Caco-2 (cell line): ENCODE measurements at regions of chr11 and their contacts with region 1.

Region 1: DNA sequence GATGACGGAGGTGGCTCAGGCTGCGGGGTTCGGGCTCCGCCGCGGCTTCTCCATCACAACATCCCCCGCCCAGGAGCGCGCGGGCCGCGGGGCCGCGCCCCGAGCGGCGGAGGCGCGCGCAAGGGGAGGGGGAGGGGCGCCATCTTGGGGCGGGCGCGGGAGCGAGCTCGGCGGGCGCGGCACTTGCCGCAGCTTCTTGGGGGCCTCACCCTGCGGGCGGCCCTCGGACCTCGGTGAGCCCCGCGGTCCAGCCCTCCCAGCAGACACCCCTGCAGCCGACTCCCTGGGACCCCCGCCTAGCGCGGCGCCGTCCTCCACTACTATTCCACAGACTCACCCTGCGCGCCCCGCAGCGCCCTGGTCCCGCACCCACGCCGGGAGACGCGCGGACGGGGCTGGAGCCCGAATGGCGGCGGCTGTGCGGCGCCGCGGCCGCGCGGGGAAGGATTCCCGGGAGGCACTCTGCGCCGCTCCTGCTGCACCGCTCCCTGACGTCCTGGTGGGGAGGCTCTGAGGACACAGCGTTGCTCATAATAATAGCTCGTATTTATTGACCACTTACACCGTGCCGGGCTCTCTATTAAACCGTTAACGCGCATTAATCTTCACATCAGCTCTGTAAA is at the start of gene APBB1:
- DNase-seq: peak in 1 of 2 experiments; percentile 75
- H3K4me3 ChIP-seq: peak within 1 kb of the TSS; percentile 81
- H3K4me3 Mint-ChIP-seq: no peak within 1 kb of the TSS
- H3K27ac Mint-ChIP-seq: no peak within 1 kb of the TSS
- H3K4me1 ChIP-seq: peaks cover 14% of the 10 kb centered on the region
- H3K4me1 Mint-ChIP-seq: no peaks in the 10 kb centered on the region
- H3K27me3 ChIP-seq: no peaks in the 10 kb centered on the region
- H3K27me3 Mint-ChIP-seq: peaks cover 2% of the 10 kb centered on the region
- CTCF ChIP-seq: peak in 1 of 2 experiments; percentile 13
- total RNA-seq, gene APBB1: 37.8 and 39.0 TPM in 2 replicates

Region 2: GRCh38 chr11:6431861-6432260 is 12.7 kb after region 1 on chr11:
- CTCF ChIA-PET with region 1: no interaction called
- POLR2A ChIA-PET with region 1: interaction called, 3 read pairs
- intact Hi-C with region 1: loop called (anchors 1 kb)
- DNase-seq: no peak
- H3K4me3 ChIP-seq: no peak overlapping the region
- H3K4me3 Mint-ChIP-seq: no peak overlapping the region
- H3K27ac Mint-ChIP-seq: no peak overlapping the region
- H3K4me1 ChIP-seq: peaks cover 20% of the 10 kb centered on the region
- H3K4me1 Mint-ChIP-seq: peaks cover 31% of the 10 kb centered on the region
- H3K27me3 ChIP-seq: no peaks in the 10 kb centered on the region
- H3K27me3 Mint-ChIP-seq: no peaks in the 10 kb centered on the region
- CTCF ChIP-seq: no peak

Region 3: GRCh38 chr11:6497069-6497839 is 78.1 kb after region 1 on chr11 and contains the start of gene DNHD1:
- CTCF ChIA-PET with region 1: no interaction called
- POLR2A ChIA-PET with region 1: interaction called, 10 read pairs
- intact Hi-C with region 1: no loop called
- DNase-seq: no peak
- H3K4me3 ChIP-seq: no peak within 1 kb of the TSS
- H3K4me3 Mint-ChIP-seq: no peak within 1 kb of the TSS
- H3K27ac Mint-ChIP-seq: peak within 1 kb of the TSS; percentile 6
- H3K4me1 ChIP-seq: no peaks in the 10 kb centered on the region
- H3K4me1 Mint-ChIP-seq: peaks cover 17% of the 10 kb centered on the region
- H3K27me3 ChIP-seq: no peaks in the 10 kb centered on the region
- H3K27me3 Mint-ChIP-seq: no peaks in the 10 kb centered on the region
- CTCF ChIP-seq: no peak
- total RNA-seq, gene DNHD1: 5.7 and 6.7 TPM in 2 replicates

Region 4: GRCh38 chr11:6556139-6556949 is 137.2 kb after region 1 on chr11:
- CTCF ChIA-PET with region 1: no interaction called
- POLR2A ChIA-PET with region 1: no interaction called
- intact Hi-C with region 1: no loop called
- DNase-seq: no peak
- H3K4me3 ChIP-seq: no peak overlapping the region
- H3K4me3 Mint-ChIP-seq: no peak overlapping the region
- H3K27ac Mint-ChIP-seq: no peak overlapping the region
- H3K4me1 ChIP-seq: no peaks in the 10 kb centered on the region
- H3K4me1 Mint-ChIP-seq: no peaks in the 10 kb centered on the region
- H3K27me3 ChIP-seq: no peaks in the 10 kb centered on the region
- H3K27me3 Mint-ChIP-seq: no peaks in the 10 kb centered on the region
- CTCF ChIP-seq: no peak